ENCODE measurements at regions of chr4 and their contacts with region 1.

Region 1: GRCh38 chr4:15681207-15682015 is at the start of gene FAM200B:
- DNase-seq: peak; percentile 99
- ATAC-seq: peak; percentile 98
- H3K4me3 Mint-ChIP-seq: peak within 1 kb of the TSS; percentile 98
- H3K27ac Mint-ChIP-seq: peak within 1 kb of the TSS; percentile 96
- H3K4me1 Mint-ChIP-seq: peaks cover 39% of the 10 kb centered on the region
- H3K27me3 Mint-ChIP-seq: no peaks in the 10 kb centered on the region
- total RNA-seq, gene FAM200B: 9.8 to 13.3 TPM

Region 2: GRCh38 chr4:15444872-15445547 is 236.4 kb before region 1 on chr4:
- CTCF ChIA-PET with region 1: no interaction called
- POLR2A ChIA-PET with region 1: no interaction called
- intact Hi-C with region 1: no loop called
- DNase-seq: no peak
- ATAC-seq: no peak
- H3K4me3 Mint-ChIP-seq: no peak overlapping the region
- H3K27ac Mint-ChIP-seq: no peak overlapping the region
- H3K4me1 Mint-ChIP-seq: peaks cover 11% of the 10 kb centered on the region
- H3K27me3 Mint-ChIP-seq: no peaks in the 10 kb centered on the region

Region 3: DNA sequence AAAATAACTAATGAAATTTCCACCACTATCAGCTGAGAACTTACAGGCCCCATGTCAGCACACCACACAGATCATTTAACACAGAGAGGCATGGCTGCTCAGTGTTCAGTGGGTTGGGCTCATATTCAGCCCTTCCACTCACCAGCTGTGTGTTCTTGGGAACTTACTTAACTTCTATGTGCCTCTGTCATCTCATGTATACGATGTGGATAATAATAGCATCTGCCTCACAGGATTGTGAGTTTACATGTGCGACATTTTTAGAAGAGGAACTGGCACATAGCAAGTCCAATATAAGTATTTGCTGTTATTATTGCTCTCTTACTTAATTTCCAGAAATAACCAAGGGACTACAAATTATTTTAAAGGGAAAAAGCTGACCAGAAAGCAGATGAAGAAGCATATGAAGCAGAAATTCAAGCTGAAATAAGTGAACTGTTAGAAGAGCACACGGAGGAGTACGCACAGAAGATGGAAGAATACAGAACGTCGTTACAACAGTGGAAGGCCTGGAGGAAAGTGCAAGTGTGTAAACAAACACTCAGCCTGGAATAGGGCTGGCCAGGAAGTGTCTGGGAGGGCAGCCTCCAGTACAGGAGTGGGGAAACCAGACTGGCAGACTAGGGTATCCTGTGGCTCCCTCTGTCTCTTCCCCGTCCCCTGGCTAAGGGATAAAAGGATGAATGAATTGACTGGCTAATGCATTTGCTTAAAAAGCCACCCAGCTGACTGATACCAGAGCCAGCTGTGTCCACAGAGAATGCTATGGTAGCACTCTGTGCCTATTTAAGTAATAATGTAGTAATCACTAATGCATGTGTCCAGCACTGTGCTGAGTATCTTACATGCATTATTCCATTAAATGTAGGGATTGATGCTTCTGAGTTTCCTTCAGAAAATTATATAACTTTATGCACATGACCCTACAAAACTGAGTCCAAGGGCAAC is 144.6 kb before region 1 on chr4:
- CTCF ChIA-PET with region 1: no interaction called
- POLR2A ChIA-PET with region 1: no interaction called
- intact Hi-C with region 1: no loop called
- DNase-seq: no peak
- ATAC-seq: no peak
- H3K4me3 Mint-ChIP-seq: no peak overlapping the region
- H3K27ac Mint-ChIP-seq: no peak overlapping the region
- H3K4me1 Mint-ChIP-seq: no peaks in the 10 kb centered on the region
- H3K27me3 Mint-ChIP-seq: no peaks in the 10 kb centered on the region

Region 4: GRCh38 chr4:15702941-15703403 is 21.6 kb after region 1 on chr4 and contains the start of gene BST1:
- CTCF ChIA-PET with region 1: no interaction called
- POLR2A ChIA-PET with region 1: interaction called, 4 read pairs
- intact Hi-C with region 1: loop called in 1 of 2 experiments (anchors 2 kb)
- DNase-seq: peak; percentile 70
- ATAC-seq: peak; percentile 82
- H3K4me3 Mint-ChIP-seq: peak within 1 kb of the TSS; percentile 75
- H3K27ac Mint-ChIP-seq: peak within 1 kb of the TSS; percentile 44
- H3K4me1 Mint-ChIP-seq: peaks cover 4% of the 10 kb centered on the region
- H3K27me3 Mint-ChIP-seq: peaks cover 10% of the 10 kb centered on the region
- total RNA-seq, gene BST1: 0.47 to 0.66 TPM